PC-3 (cell line): ENCODE measurements at regions of chr11 and their contacts with region 1.

Region 1: GRCh38 chr11:70202898-70203748 is at the start of gene FADD:
- DNase-seq: peak; percentile 99
- ATAC-seq: peak; percentile 75
- H3K4me3 ChIP-seq: peak within 1 kb of the TSS; percentile 76
- H3K27ac ChIP-seq: peak within 1 kb of the TSS; percentile 96
- H3K4me1 ChIP-seq: peaks cover 22% of the 10 kb centered on the region
- H3K27me3 ChIP-seq: no peaks in the 10 kb centered on the region
- CTCF ChIP-seq: no peak
- total RNA-seq, gene FADD: 79.5 and 93.9 TPM in 2 replicates

Region 2: DNA sequence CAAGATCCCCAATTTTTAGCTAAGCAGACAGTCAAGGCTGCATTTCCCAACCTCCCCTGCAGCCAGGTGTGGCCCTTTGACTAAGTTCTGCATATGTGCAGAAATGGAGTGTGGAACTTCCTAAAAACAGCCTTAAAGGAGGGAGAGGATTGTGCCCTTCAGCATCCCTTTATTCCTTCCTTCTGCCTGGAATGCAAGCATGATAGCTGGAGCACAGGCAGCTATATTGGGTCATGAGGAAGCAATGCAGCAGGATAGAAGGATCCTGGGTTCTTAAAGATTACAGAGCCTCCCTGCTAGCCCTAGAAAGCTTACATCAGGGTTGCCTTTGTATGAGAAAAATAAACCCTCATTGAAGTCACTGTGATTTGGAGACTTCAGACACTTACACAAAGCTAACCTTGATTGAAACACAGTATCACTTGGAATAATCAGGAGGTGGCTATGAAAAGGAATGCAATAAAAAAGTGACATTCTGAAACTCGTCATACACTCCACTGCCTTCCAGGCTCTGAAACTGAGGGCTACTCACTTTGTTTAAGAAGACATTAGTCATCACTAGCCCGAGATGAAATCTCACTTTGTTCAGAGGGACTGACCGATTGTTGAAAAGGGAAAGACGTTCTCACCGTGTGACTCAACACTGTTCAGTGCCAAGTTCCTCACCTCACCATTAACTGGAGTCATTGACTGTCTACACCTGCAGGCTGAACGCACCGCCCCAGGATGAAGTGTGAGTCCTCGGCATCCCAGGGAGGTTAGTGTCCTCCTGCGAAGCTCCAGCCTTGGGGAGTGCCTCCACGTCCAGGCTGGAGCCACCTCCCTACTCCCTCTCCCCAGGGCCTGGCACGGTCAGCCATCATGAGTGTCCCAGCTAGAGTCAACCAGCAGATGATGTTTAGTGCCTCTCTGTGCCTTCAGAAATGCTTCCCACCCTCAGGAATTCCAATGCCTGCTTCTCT is 30.2 kb after region 1 on chr11:
- CTCF ChIA-PET with region 1: no interaction called
- POLR2A ChIA-PET with region 1: no interaction called
- intact Hi-C with region 1: loop called (anchors 1 kb)
- DNase-seq: peak; percentile 100
- ATAC-seq: peak; percentile 95
- H3K4me3 ChIP-seq: no peak overlapping the region
- H3K27ac ChIP-seq: peak overlapping the region; percentile 86
- H3K4me1 ChIP-seq: peaks cover 14% of the 10 kb centered on the region
- H3K27me3 ChIP-seq: no peaks in the 10 kb centered on the region
- CTCF ChIP-seq: no peak